Mammary epithelial cell (primary cell): ENCODE measurements at regions of chr18 and their contacts with region 1.

Region 1: DNA sequence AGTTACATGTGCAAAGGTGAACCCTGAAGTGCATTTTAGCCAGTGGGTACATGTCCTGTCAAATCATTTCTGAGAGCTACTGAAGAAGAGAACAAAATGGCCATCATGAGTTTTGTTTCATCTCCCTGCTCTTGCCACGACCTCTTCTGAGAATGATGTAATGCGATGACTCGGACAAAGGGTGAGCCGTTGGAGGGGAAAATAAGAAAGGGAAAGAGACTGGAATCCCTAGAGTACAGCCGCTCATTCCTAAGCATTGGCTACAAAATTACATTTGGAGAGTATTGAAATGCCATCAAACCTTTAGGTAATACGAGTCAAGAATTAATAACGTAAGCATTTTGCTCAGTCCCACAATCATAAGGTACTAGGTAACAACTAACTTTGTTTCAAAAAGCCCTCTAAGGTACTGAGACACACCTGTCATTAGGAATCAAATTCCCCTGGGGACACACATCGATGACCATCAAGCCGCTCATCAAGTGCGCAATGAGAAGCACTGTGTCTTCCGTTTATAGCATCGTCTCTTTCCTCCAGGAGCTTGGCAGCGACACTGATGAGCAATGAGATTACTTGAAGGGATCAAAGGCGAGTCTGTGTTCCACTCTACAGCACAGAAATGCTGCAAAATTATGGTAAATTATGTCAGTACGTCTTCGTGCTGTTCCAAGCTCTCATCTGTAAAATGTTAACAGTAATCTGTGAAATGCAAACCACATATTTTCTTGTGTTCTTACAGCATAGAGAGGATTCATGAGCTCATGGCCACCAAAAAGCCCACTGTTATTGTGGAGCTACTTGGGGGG is 97.3 kb upstream of the PIEZO2 start:
- DNase-seq: no peak
- H3K4me3 ChIP-seq: no peak overlapping the region
- H3K27ac ChIP-seq: no peak overlapping the region
- H3K4me1 ChIP-seq: no peaks in the 10 kb centered on the region
- H3K27me3 ChIP-seq: no peaks in the 10 kb centered on the region
- CTCF ChIP-seq: no peak

Region 2: GRCh38 chr18:11279461-11279860 is 32.8 kb after region 1 on chr18:
- CTCF ChIA-PET with region 1: no interaction called
- dilution Hi-C with region 1: loop called (anchors 5 kb)
- in situ Hi-C with region 1: no loop called
- intact Hi-C with region 1: no loop called
- DNase-seq: no peak
- H3K4me3 ChIP-seq: no peak overlapping the region
- H3K27ac ChIP-seq: no peak overlapping the region
- H3K4me1 ChIP-seq: no peaks in the 10 kb centered on the region
- H3K27me3 ChIP-seq: no peaks in the 10 kb centered on the region
- CTCF ChIP-seq: no peak